CD4-positive, alpha-beta memory T cell (primary cell): ENCODE measurements at regions of chr1 and their contacts with region 1.

Region 1: DNA sequence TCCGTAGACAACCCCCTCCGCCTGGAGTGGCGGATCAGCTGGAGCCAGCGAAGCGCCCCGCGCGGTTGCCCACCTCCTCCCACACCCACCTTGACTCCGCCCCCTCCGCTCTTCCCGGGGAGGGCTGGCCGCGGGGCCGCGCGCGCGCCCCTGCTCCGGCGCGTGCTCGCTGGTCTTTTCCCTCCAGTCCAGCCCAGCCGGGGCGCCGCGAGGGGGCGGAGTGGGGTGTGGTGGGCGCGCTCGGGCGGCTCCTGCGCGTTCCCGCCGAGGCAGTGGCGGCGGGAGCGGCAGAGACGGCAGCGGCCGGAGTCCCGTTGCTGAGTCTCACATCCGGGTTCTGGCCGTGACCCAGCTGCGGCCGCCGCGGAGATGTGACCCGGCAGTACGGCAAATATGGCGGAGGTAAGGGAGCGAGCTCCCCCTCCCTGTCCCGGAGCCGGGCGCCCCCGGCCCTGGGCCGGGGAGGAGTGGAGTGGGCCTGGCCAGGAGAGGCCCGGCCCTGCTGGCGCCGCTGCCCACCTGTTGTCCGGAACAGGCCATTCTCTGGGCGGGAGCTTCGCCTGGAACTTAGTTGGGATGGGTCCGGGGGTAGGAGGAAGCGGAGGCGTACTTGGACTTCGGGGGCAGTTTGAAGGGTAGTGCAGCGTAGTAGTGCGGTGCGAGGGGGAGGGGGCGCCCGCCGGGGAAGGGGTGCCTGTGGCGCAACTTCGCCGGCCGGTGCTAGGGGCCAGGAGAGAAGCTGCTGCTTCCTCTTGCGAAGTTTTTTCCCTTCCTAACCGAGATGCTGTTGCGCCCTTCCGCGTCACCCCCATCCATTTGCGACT is 5.4 kb downstream of the MIER1 start:
- DNase-seq: peak; percentile 90 to 95 (median 93)
- H3K4me3 ChIP-seq: peak overlapping the region; percentile 67 to 95
- H3K4me3 Mint-ChIP-seq: peak overlapping the region; percentile 83 to 95 (median 89)
- H3K27ac ChIP-seq: peak overlapping the region; percentile 95
- H3K27ac Mint-ChIP-seq: peak overlapping the region; percentile 76 to 97 (median 95)
- H3K4me1 ChIP-seq: peaks cover 63% of the 10 kb centered on the region
- H3K4me1 Mint-ChIP-seq: peaks cover 36 to 81% (median 51%) of the 10 kb centered on the region in 4 donors
- H3K27me3 ChIP-seq: no peaks in the 10 kb centered on the region
- H3K27me3 Mint-ChIP-seq: no peaks in the 10 kb centered on the region

Region 2: DNA sequence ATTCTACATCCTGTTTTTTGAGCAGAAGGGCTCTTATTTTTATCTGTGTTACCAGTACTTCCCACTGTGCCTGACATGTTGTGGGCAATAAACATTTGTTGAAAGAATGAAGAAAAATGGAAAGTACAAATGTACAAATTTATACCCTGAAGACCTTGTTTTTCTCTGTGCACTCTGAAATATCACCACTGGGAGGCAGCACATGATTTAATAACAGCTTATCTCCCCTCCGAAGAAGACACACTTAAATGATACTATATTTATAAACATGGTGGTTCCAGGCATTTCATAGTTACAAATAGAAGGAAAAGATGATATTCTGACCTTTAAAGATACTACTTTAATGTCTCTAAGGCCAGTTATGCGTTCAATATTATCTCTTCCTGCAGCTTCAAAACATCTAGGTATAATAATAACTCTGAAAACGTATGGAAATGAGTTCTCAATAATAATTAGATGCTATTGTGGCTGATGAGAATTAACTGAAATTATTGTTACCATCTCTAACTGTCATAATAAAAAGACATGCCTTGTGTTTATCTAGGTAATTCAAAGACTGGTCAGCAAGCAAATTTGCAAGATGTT is 165.1 kb before region 1 on chr1:
- CTCF ChIA-PET with region 1: interaction called, 7 read pairs
- POLR2A ChIA-PET with region 1: interaction called, 10 read pairs
- intact Hi-C with region 1: loop called (anchors 2 kb)
- DNase-seq: peak; percentile 53 to 59 (median 54)
- H3K4me3 ChIP-seq: no peak overlapping the region
- H3K4me3 Mint-ChIP-seq: no peak overlapping the region
- H3K27ac ChIP-seq: no peak overlapping the region
- H3K27ac Mint-ChIP-seq: no peak overlapping the region
- H3K4me1 ChIP-seq: peaks cover 13% of the 10 kb centered on the region
- H3K4me1 Mint-ChIP-seq: peaks cover 13 to 17% (median 15%) of the 10 kb centered on the region in 4 donors
- H3K27me3 ChIP-seq: no peaks in the 10 kb centered on the region
- H3K27me3 Mint-ChIP-seq: no peaks in the 10 kb centered on the region

Region 3: GRCh38 chr1:66944330-66945274 is 14.4 kb after region 1 on chr1:
- CTCF ChIA-PET with region 1: interaction called, 3 read pairs
- POLR2A ChIA-PET with region 1: interaction called, 6 read pairs
- intact Hi-C with region 1: loop called (anchors 1 kb)
- DNase-seq: no peak
- H3K4me3 ChIP-seq: no peak overlapping the region
- H3K4me3 Mint-ChIP-seq: no peak overlapping the region
- H3K27ac ChIP-seq: no peak overlapping the region
- H3K27ac Mint-ChIP-seq: peak overlapping the region in 2 of 7 donors; percentile 15 to 62
- H3K4me1 ChIP-seq: peaks cover 63% of the 10 kb centered on the region
- H3K4me1 Mint-ChIP-seq: peaks cover 48 to 84% (median 63%) of the 10 kb centered on the region in 4 donors
- H3K27me3 ChIP-seq: no peaks in the 10 kb centered on the region
- H3K27me3 Mint-ChIP-seq: no peaks in the 10 kb centered on the region

Region 4: GRCh38 chr1:66981679-66982078 is 51.5 kb after region 1 on chr1:
- CTCF ChIA-PET with region 1: interaction called, 3 read pairs
- POLR2A ChIA-PET with region 1: interaction called, 16 read pairs
- intact Hi-C with region 1: loop called (anchors 2 kb)
- DNase-seq: peak; percentile 55 to 72 (median 67)
- H3K4me3 ChIP-seq: peak overlapping the region in 1 of 2 donors; percentile 9
- H3K4me3 Mint-ChIP-seq: peak overlapping the region; percentile 2 to 80 (median 72)
- H3K27ac ChIP-seq: peak overlapping the region; percentile 61
- H3K27ac Mint-ChIP-seq: peak overlapping the region; percentile 53 to 94 (median 77)
- H3K4me1 ChIP-seq: peaks cover 25% of the 10 kb centered on the region
- H3K4me1 Mint-ChIP-seq: peaks cover 20 to 37% (median 22%) of the 10 kb centered on the region in 4 donors
- H3K27me3 ChIP-seq: no peaks in the 10 kb centered on the region
- H3K27me3 Mint-ChIP-seq: no peaks in the 10 kb centered on the region

Region 5: GRCh38 chr1:67013573-67013972 is 83.4 kb after region 1 on chr1:
- CTCF ChIA-PET with region 1: no interaction called
- POLR2A ChIA-PET with region 1: no interaction called
- intact Hi-C with region 1: no loop called
- DNase-seq: no peak
- H3K4me3 ChIP-seq: no peak overlapping the region
- H3K4me3 Mint-ChIP-seq: no peak overlapping the region
- H3K27ac ChIP-seq: no peak overlapping the region
- H3K27ac Mint-ChIP-seq: peak overlapping the region in 2 of 7 donors; percentile 1 to 78
- H3K4me1 ChIP-seq: no peaks in the 10 kb centered on the region
- H3K4me1 Mint-ChIP-seq: peaks cover 0 to 5% (median 2%) of the 10 kb centered on the region in 4 donors
- H3K27me3 ChIP-seq: no peaks in the 10 kb centered on the region
- H3K27me3 Mint-ChIP-seq: no peaks in the 10 kb centered on the region

Region 6: DNA sequence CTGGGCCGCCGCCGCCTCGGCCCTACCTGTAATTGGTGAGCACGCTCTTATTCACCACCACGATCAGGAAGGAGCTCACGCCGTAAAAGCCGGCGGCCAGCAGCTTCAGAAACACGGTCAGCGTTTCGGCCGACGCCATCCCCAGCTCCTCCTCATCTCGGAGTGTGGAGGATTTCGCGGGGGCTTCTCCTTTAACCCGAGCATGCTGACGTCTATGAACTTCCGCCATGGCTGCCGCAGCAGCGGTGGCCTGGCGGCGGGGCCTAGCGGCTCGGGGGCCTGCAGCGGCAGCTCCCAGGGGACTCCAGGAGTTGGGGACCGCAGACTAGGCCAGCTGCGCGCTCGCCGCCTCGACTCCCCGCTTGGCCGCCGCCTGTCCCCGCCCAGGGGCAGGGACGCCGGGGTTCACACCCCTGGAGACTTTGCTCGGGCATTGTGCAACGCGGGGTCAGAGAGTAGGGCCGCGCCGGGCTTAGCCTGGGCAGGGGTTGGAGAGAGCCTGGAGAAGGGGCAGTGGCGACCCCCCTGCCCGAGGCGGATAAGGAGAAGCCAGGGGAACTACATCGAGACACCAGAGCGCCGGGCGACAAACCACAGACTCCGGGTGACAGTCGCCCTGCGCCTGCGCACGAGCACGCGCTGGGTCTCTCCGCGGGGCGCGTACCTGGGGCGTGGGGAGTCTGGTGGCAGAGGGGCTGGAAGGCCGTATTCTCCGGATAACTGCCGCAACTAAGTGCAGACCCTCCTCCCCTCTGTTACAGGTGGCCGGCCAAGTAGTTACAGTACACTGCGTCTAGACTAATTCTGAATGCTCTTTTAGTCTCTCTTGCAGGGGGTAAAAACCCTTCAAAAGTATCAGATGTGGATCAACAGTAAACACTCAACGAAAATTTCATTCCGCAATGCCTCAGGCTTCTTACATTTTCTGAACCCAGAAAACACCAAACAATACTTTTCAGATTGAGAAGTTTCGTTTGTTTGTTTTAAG is 123.9 kb after region 1 on chr1 and contains the start of gene SLC35D1:
- CTCF ChIA-PET with region 1: no interaction called
- POLR2A ChIA-PET with region 1: interaction called, 22 read pairs
- intact Hi-C with region 1: loop called (anchors 1 kb)
- DNase-seq: peak; percentile 68 to 82 (median 77)
- H3K4me3 ChIP-seq: peak within 1 kb of the TSS; percentile 73 to 88
- H3K4me3 Mint-ChIP-seq: peak within 1 kb of the TSS; percentile 93 to 96 (median 95)
- H3K27ac ChIP-seq: peak within 1 kb of the TSS; percentile 91
- H3K27ac Mint-ChIP-seq: peak within 1 kb of the TSS; percentile 66 to 98 (median 97)
- H3K4me1 ChIP-seq: peaks cover 25% of the 10 kb centered on the region
- H3K4me1 Mint-ChIP-seq: peaks cover 21 to 38% (median 28%) of the 10 kb centered on the region in 4 donors
- H3K27me3 ChIP-seq: no peaks in the 10 kb centered on the region
- H3K27me3 Mint-ChIP-seq: no peaks in the 10 kb centered on the region
- total RNA-seq, gene SLC35D1: 16.9 to 17.7 TPM

Region 7: GRCh38 chr1:67174716-67175284 is 244.6 kb after region 1 on chr1:
- CTCF ChIA-PET with region 1: no interaction called
- POLR2A ChIA-PET with region 1: interaction called, 10 read pairs
- intact Hi-C with region 1: no loop called
- DNase-seq: no peak
- H3K4me3 ChIP-seq: no peak overlapping the region
- H3K4me3 Mint-ChIP-seq: peak overlapping the region in 2 of 8 donors; percentile 21 to 40
- H3K27ac ChIP-seq: no peak overlapping the region
- H3K27ac Mint-ChIP-seq: peak overlapping the region in 1 of 7 donors; percentile 52
- H3K4me1 ChIP-seq: peaks cover 40% of the 10 kb centered on the region
- H3K4me1 Mint-ChIP-seq: peaks cover 30 to 59% (median 44%) of the 10 kb centered on the region in 4 donors
- H3K27me3 ChIP-seq: no peaks in the 10 kb centered on the region
- H3K27me3 Mint-ChIP-seq: peaks cover 5 to 7% of the 10 kb centered on the region in 2 donors

Region 8: GRCh38 chr1:67685067-67685557 is 754.9 kb after region 1 on chr1 and contains the start of gene GADD45A:
- CTCF ChIA-PET with region 1: no interaction called
- POLR2A ChIA-PET with region 1: interaction called, 19 read pairs
- intact Hi-C with region 1: loop called (anchors 2 kb)
- DNase-seq: peak; percentile 93 to 98 (median 95)
- H3K4me3 ChIP-seq: peak within 1 kb of the TSS; percentile 69 to 81
- H3K4me3 Mint-ChIP-seq: peak within 1 kb of the TSS; percentile 96 to 99 (median 98)
- H3K27ac ChIP-seq: peak within 1 kb of the TSS; percentile 60
- H3K27ac Mint-ChIP-seq: peak within 1 kb of the TSS; percentile 88 to 97 (median 96)
- H3K4me1 ChIP-seq: peaks cover 19% of the 10 kb centered on the region
- H3K4me1 Mint-ChIP-seq: peaks cover 11 to 24% (median 18%) of the 10 kb centered on the region in 4 donors
- H3K27me3 ChIP-seq: no peaks in the 10 kb centered on the region
- H3K27me3 Mint-ChIP-seq: no peaks in the 10 kb centered on the region
- total RNA-seq, gene GADD45A: 25.3 to 26.8 TPM